CD4-positive, alpha-beta T cell (primary cell): ENCODE measurements at regions of chr12 and their contacts with region 1.

Region 1: GRCh38 chr12:56117778-56118687 is at the start of gene ZC3H10:
- DNase-seq: peak; percentile 89 to 100 (median 94)
- ATAC-seq: peak; percentile 67
- H3K4me3 ChIP-seq: peak within 1 kb of the TSS; percentile 73
- H3K4me3 Mint-ChIP-seq: peak within 1 kb of the TSS; percentile 97
- H3K27ac ChIP-seq: peak within 1 kb of the TSS; percentile 75 to 90
- H3K27ac Mint-ChIP-seq: peak within 1 kb of the TSS; percentile 94
- H3K4me1 ChIP-seq: peaks cover 35% of the 10 kb centered on the region
- H3K4me1 Mint-ChIP-seq: peaks cover 33% of the 10 kb centered on the region
- H3K27me3 ChIP-seq: no peaks in the 10 kb centered on the region
- H3K27me3 Mint-ChIP-seq: no peaks in the 10 kb centered on the region
- CTCF ChIP-seq: peak; percentile 52
- total RNA-seq, gene ZC3H10: 6.3 to 8.9 TPM

Region 2: GRCh38 chr12:55738123-55739024 is 379.7 kb before region 1 on chr12:
- CTCF ChIA-PET with region 1: interaction called, 3 read pairs
- POLR2A ChIA-PET with region 1: interaction called, 12 read pairs
- intact Hi-C with region 1: loop called in 1 of 2 experiments (anchors 1 kb)
- DNase-seq: peak; percentile 51 to 91 (median 74)
- ATAC-seq: peak; percentile 73
- H3K4me3 ChIP-seq: peak overlapping the region; percentile 75
- H3K4me3 Mint-ChIP-seq: peak overlapping the region; percentile 93
- H3K27ac ChIP-seq: peak overlapping the region; percentile 79 to 83
- H3K27ac Mint-ChIP-seq: peak overlapping the region; percentile 89
- H3K4me1 ChIP-seq: peaks cover 33% of the 10 kb centered on the region
- H3K4me1 Mint-ChIP-seq: peaks cover 40% of the 10 kb centered on the region
- H3K27me3 ChIP-seq: no peaks in the 10 kb centered on the region
- H3K27me3 Mint-ChIP-seq: no peaks in the 10 kb centered on the region
- CTCF ChIP-seq: peak; percentile 88

Region 3: GRCh38 chr12:55996715-55997534 is 121.1 kb before region 1 on chr12 and contains the start of gene SUOX:
- CTCF ChIA-PET with region 1: interaction called, 15 read pairs
- POLR2A ChIA-PET with region 1: interaction called, 4 read pairs
- intact Hi-C with region 1: no loop called
- DNase-seq: peak in 5 of 14 experiments; percentile 8 to 69 (median 48)
- ATAC-seq: peak; percentile 33
- H3K4me3 ChIP-seq: peak within 1 kb of the TSS; percentile 43
- H3K4me3 Mint-ChIP-seq: peak within 1 kb of the TSS; percentile 51
- H3K27ac ChIP-seq: no peak within 1 kb of the TSS
- H3K27ac Mint-ChIP-seq: no peak within 1 kb of the TSS
- H3K4me1 ChIP-seq: peaks cover 17% of the 10 kb centered on the region
- H3K4me1 Mint-ChIP-seq: peaks cover 23% of the 10 kb centered on the region
- H3K27me3 ChIP-seq: peaks cover 5 to 12% of the 10 kb centered on the region in 2 experiments
- H3K27me3 Mint-ChIP-seq: peaks cover 20% of the 10 kb centered on the region
- CTCF ChIP-seq: no peak
- total RNA-seq, gene SUOX: 0.82 to 1.2 TPM

Region 4: DNA sequence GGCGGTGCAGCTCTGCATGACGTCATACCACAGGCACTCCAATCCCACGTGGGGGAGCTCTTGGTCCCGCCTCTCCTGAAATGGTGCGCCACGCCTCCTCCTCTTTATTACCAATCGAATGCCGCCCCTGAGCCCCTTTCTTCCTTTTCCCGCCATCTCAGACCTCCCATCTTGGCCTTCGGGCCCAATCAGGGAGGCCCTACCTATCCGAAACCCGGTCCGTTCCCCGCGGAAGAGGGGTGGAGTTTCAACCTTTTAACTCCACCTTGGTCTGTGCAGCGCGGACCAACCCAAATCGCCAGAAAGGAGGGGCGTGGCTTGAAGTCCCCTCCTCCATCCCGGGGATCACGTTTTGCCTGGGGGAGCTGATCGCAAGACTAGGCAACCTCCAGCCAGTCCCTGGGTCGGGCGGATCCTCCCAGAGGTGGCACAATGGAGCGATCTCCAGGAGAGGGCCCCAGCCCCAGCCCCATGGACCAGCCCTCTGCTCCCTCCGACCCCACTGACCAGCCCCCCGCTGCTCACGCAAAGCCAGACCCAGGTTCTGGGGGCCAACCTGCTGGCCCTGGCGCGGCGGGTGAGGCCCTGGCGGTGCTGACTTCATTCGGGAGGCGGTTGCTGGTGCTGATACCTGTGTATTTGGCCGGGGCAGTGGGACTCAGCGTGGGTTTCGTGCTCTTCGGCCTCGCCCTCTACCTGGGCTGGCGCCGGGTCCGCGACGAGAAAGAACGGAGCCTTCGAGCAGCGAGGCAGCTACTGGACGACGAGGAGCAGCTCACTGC is 10.0 kb after region 1 on chr12 and contains the start of gene ESYT1:
- CTCF ChIA-PET with region 1: interaction called, 16 read pairs
- POLR2A ChIA-PET with region 1: interaction called, 133 read pairs
- intact Hi-C with region 1: no loop called
- DNase-seq: peak; percentile 93 to 100 (median 96)
- ATAC-seq: peak; percentile 90
- H3K4me3 ChIP-seq: peak within 1 kb of the TSS; percentile 99
- H3K4me3 Mint-ChIP-seq: peak within 1 kb of the TSS; percentile 97
- H3K27ac ChIP-seq: peak within 1 kb of the TSS; percentile 77
- H3K27ac Mint-ChIP-seq: peak within 1 kb of the TSS; percentile 86
- H3K4me1 ChIP-seq: peaks cover 66% of the 10 kb centered on the region
- H3K4me1 Mint-ChIP-seq: peaks cover 69% of the 10 kb centered on the region
- H3K27me3 ChIP-seq: no peaks in the 10 kb centered on the region
- H3K27me3 Mint-ChIP-seq: no peaks in the 10 kb centered on the region
- CTCF ChIP-seq: no peak
- total RNA-seq, gene ESYT1: 88.5 to 90.3 TPM

Region 5: DNA sequence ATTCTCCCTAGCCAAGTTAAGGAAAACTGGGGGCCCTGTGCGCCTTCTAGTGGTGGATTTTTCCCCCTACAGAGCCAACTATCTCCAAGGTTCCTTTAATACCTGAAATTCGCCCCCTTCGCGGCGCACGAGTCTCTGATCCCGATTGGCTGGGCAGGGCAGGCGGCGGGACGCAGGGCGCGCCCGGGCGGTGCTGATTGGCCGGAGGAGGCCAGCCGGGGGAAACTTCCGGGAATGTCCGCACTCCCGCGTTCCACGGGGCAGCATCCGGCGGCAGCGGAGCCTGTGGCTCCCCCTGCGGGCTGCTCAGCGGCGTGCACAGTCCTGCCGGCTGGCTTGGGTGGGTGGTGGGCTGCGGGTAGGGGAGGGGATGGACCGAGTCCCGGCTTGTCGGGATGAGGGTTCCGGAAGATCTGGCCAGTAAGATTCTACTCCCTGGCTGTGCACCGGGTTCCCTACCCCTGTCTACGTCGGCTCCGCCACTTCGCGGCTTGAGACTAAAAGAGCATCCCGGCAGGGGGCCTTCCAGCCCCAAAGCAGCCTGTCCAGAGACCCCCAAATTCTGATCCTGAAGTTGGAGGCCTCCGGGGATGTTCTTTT is 106.2 kb after region 1 on chr12 and contains the start of gene NABP2:
- CTCF ChIA-PET with region 1: interaction called, 23 read pairs
- POLR2A ChIA-PET with region 1: interaction called, 62 read pairs
- intact Hi-C with region 1: loop called (anchors 1 kb)
- DNase-seq: peak; percentile 73 to 96 (median 88)
- ATAC-seq: peak; percentile 66
- H3K4me3 ChIP-seq: peak within 1 kb of the TSS; percentile 70
- H3K4me3 Mint-ChIP-seq: peak within 1 kb of the TSS; percentile 98
- H3K27ac ChIP-seq: peak within 1 kb of the TSS; percentile 60 to 81
- H3K27ac Mint-ChIP-seq: peak within 1 kb of the TSS; percentile 100
- H3K4me1 ChIP-seq: peaks cover 56% of the 10 kb centered on the region
- H3K4me1 Mint-ChIP-seq: peaks cover 48% of the 10 kb centered on the region
- H3K27me3 ChIP-seq: no peaks in the 10 kb centered on the region
- H3K27me3 Mint-ChIP-seq: no peaks in the 10 kb centered on the region
- CTCF ChIP-seq: peak; percentile 88
- total RNA-seq, gene NABP2: 7.6 to 9.1 TPM

Region 6: DNA sequence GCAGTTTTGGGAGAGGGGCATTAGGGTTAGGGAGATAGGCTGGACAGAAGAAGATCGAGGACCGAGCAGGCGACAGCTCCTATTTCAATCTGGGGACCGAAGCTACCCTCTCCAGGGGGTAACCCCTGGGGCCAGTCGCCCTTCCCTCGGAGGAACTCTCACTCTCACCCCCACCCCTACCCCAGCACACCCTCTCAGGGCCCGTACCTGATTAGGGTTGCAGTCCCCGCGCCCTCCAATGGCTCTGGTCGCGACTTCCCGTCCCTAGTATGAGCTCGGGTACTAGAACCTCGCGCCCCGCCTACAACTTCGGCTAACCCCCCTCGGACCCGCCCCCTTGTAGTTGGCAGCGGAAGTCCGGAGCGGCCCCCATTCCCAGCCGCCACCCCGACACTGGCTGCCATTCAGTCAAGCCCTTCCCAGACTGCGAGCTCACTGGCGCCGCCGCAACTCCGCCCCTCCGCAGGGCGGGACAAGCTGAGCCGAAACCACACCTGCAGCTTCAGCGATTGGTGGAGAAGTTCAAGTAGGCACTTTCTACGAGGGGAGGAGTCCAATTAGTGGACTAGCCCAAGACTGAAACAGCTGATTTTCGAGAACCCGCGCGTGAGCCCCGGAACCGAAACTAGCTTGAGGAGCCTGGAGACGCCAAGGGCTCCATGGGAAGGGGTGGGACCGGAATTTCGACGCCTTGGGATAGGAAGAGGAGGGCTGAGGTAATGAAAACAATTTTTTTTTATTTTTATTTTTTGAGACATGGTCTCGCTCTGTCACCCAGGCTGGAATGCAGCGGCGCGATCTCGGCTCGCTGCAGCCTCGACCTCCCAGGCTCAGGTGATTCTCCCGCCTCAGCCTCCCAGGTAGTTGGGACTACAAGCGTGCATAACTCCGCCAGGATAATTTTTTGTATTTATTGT is 242.1 kb after region 1 on chr12 and contains the start of gene STAT2:
- CTCF ChIA-PET with region 1: no interaction called
- POLR2A ChIA-PET with region 1: interaction called, 12 read pairs
- intact Hi-C with region 1: no loop called
- DNase-seq: peak; percentile 97 to 100 (median 99)
- ATAC-seq: peak; percentile 94
- H3K4me3 ChIP-seq: peak within 1 kb of the TSS; percentile 90
- H3K4me3 Mint-ChIP-seq: peak within 1 kb of the TSS; percentile 99
- H3K27ac ChIP-seq: peak within 1 kb of the TSS; percentile 54 to 79
- H3K27ac Mint-ChIP-seq: peak within 1 kb of the TSS; percentile 93
- H3K4me1 ChIP-seq: peaks cover 27% of the 10 kb centered on the region
- H3K4me1 Mint-ChIP-seq: peaks cover 33% of the 10 kb centered on the region
- H3K27me3 ChIP-seq: no peaks in the 10 kb centered on the region
- H3K27me3 Mint-ChIP-seq: no peaks in the 10 kb centered on the region
- CTCF ChIP-seq: no peak
- total RNA-seq, gene STAT2: 114 to 125 TPM